GM12878 (cell line): ENCODE measurements at regions of chr2 and their contacts with region 1.

Region 1: DNA sequence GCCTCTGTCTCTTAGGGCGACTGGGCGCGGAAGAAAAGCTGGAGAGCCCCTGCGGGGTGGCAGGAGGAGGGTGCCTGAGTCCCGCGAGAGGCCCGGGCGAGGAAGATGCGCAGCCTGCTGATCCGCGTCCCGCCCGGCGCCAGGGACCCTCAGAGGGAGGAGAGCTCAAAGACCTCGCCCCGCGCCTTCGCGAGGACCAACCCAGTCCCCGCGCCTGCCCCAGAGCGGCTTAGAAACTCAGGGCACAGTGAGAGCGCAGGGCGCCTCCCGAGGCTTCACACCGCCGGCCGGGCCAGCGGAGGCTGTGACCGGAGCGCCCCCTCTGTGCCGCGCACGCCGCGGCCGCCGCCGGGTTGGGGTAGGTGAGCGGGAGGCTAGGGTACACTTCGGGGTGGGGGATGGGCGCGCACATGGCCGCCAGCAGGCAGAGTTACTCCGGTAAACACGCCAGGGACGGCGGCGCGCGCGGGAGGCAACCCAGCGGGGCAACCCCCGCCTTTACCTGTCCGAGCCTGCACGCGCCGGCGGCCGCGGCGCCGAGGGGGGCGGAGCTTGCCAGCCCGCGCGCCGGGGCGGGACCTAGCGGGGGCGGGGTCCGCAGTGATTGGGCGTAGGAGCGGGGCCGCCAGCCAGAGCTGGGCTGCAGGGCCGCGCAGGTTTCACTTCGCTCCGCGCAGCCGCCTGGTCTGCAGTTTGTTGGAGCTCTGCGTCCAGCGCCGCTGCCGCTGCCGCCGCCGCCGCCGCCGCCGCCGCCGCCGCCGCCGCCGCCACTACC is at the start of gene BCL2L11:
- DNase-seq: no peak
- ATAC-seq: peak; percentile 66
- H3K4me3 ChIP-seq: peak within 1 kb of the TSS; percentile 80
- H3K27ac ChIP-seq: no peak within 1 kb of the TSS
- H3K4me1 ChIP-seq: peaks cover 37% of the 10 kb centered on the region
- H3K27me3 ChIP-seq: peaks cover 7 to 29% of the 10 kb centered on the region in 2 experiments
- CTCF ChIP-seq: peak; percentile 11 to 31 (median 29); a peak in 1 of 6 replicates
- EP300 ChIP-seq: no peak
- POLR2A ChIP-seq: peak; percentile 88
- RAD21 ChIP-seq: no peak
- polyA plus RNA-seq, gene BCL2L11: 0.29 to 0.64 TPM

Region 2: GRCh38 chr2:110812726-110813645 is 307.5 kb before region 1 on chr2:
- CTCF ChIA-PET with region 1: interaction called, 16 read pairs
- POLR2A ChIA-PET with region 1: interaction called, 3 read pairs
- RAD21 ChIA-PET with region 1: interaction called, 8 read pairs
- SMC1A ChIA-PET with region 1: interaction called, 6 read pairs
- in situ Hi-C with region 1: loop called (anchors 5 kb)
- intact Hi-C with region 1: loop called (anchors 2 kb)
- DNase-seq: no peak
- ATAC-seq: no peak; the same call in 1 of the 3 replicates
- H3K4me3 ChIP-seq: no peak overlapping the region
- H3K27ac ChIP-seq: no peak overlapping the region
- H3K4me1 ChIP-seq: no peaks in the 10 kb centered on the region
- H3K27me3 ChIP-seq: peaks cover 0 to 2% of the 10 kb centered on the region in 2 experiments; a peak in 2 of 4 replicates
- CTCF ChIP-seq: no peak
- EP300 ChIP-seq: no peak
- POLR2A ChIP-seq: no peak
- RAD21 ChIP-seq: no peak

Region 3: DNA sequence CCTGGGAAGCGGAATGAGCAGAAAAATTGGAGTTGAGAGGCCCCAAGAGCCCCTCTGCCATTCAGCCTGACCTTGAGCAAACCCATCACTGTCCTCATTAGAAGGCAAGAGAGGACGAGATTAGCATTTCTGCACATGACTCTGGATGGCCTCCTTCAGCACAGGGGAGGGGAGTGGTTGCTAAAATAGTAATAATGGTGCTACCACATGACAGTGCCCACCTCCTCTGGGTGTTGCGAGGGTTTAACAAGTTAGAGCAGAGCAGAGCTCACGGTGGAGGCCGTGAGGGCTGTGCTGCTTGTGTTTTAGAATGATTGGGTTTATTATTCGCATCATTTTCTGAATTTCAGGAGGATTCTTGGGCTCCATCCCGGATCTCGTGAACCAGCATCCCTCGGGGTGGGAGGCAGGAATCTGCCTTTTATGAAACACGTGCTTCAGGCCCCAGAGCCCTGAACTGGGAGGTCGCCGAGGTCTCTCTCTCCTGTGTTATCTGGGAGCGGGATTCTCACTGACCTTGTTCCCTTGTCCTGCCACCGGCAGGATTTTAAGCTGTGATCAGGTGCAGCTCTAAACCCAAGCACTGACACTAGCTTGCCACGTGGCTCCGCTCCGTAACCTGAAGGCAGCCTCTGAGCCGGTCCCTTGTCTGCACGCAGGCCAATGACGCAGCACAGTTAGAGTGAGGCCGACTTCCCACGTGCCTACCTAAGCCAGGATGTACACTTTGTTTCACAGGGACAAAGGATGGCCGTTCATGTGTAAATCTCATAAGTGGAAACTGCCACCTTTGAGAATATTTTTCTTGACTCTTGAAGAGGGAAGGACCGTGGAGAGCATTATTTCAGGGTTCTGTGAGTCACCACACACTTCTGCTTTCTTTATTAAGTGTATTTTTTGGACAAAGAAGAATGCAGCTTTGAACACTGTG is 245.7 kb before region 1 on chr2:
- CTCF ChIA-PET with region 1: no interaction called
- POLR2A ChIA-PET with region 1: no interaction called
- RAD21 ChIA-PET with region 1: no interaction called
- SMC1A ChIA-PET with region 1: no interaction called
- in situ Hi-C with region 1: no loop called
- intact Hi-C with region 1: loop called (anchors 5 kb)
- DNase-seq: peak; percentile 75
- ATAC-seq: peak; percentile 79
- H3K4me3 ChIP-seq: no peak overlapping the region
- H3K27ac ChIP-seq: 0 out of 2 replicates have a peak overlapping the region, but pooled peaks have one; percentile 22
- H3K4me1 ChIP-seq: peaks cover 46% of the 10 kb centered on the region
- H3K27me3 ChIP-seq: no peaks in the 10 kb centered on the region
- CTCF ChIP-seq: no peak
- EP300 ChIP-seq: no peak
- POLR2A ChIP-seq: no peak
- RAD21 ChIP-seq: no peak

Region 4: DNA sequence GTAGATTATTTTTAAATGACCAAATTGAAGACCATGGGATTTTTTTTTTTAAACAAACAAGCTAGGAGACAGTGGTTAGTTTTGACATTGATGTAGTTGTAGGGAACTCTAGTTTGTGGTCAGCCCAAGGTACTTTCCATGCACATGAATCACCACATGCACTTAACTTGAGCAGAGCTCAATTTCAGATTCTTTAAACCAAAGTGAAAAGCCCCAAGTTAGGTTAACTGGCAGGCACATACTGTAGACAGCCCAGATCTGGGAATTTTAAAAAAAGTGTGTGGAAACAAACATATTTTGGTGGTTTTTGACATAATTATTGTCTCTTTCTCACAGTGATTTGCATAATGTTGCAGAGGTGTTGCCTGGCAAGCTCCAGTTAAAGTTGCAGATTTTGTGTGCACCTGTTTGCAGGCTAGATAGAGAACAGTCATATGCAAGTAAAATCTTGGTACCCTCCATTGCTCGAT is 88.6 kb after region 1 on chr2:
- CTCF ChIA-PET with region 1: interaction called, 3 read pairs
- POLR2A ChIA-PET with region 1: interaction called, 12 read pairs
- RAD21 ChIA-PET with region 1: interaction called, 28 read pairs
- SMC1A ChIA-PET with region 1: interaction called, 4 read pairs
- in situ Hi-C with region 1: no loop called
- intact Hi-C with region 1: no loop called
- DNase-seq: peak; percentile 97
- ATAC-seq: peak; percentile 95
- H3K4me3 ChIP-seq: no peak overlapping the region
- H3K27ac ChIP-seq: no peak overlapping the region
- H3K4me1 ChIP-seq: peaks cover 7% of the 10 kb centered on the region
- H3K27me3 ChIP-seq: no peaks in the 10 kb centered on the region
- CTCF ChIP-seq: no peak
- EP300 ChIP-seq: peak; percentile 95 to 97
- POLR2A ChIP-seq: no peak
- RAD21 ChIP-seq: 0 out of 2 replicates have a peak, but pooled peaks have one; percentile 1

Region 5: GRCh38 chr2:111698743-111699554 is 578.5 kb after region 1 on chr2:
- CTCF ChIA-PET with region 1: interaction called, 4 read pairs
- POLR2A ChIA-PET with region 1: no interaction called
- RAD21 ChIA-PET with region 1: no interaction called
- SMC1A ChIA-PET with region 1: no interaction called
- in situ Hi-C with region 1: loop called (anchors 10 kb)
- intact Hi-C with region 1: loop called (anchors 5 kb)
- DNase-seq: no peak
- ATAC-seq: peak; percentile 81
- H3K4me3 ChIP-seq: no peak overlapping the region
- H3K27ac ChIP-seq: no peak overlapping the region
- H3K4me1 ChIP-seq: peaks cover 3% of the 10 kb centered on the region; the same call in 1 of the 2 replicates
- H3K27me3 ChIP-seq: 0 out of 4 replicates have a peak, but pooled peaks cover 0 to 2% of the 10 kb centered on the region in 2 experiments
- CTCF ChIP-seq: peak in 2 of 3 experiments; percentile 16 to 43; a peak in 4 of 6 replicates
- EP300 ChIP-seq: no peak
- POLR2A ChIP-seq: no peak
- RAD21 ChIP-seq: peak; percentile 34; the same call in 1 of the 2 replicates